ENCODE measurements at regions of chr4 and their contacts with region 1.

Region 1: GRCh38 chr4:8468746-8469535 is 28.4 kb downstream of the TRMT44 start:
- DNase-seq: peak; percentile 58 to 87 (median 84)
- ATAC-seq: peak; percentile 40 to 58
- H3K4me3 ChIP-seq: no peak overlapping the region
- H3K27ac ChIP-seq: no peak overlapping the region
- H3K4me1 ChIP-seq: peaks cover 3% of the 10 kb centered on the region
- H3K27me3 ChIP-seq: no peaks in the 10 kb centered on the region

Region 2: GRCh38 chr4:8351931-8352367 is 117.0 kb before region 1 on chr4:
- intact Hi-C with region 1: no loop called
- DNase-seq: no peak
- ATAC-seq: peak in 1 of 2 donors; percentile 11
- H3K4me3 ChIP-seq: no peak overlapping the region
- H3K27ac ChIP-seq: no peak overlapping the region
- H3K4me1 ChIP-seq: peaks cover 5% of the 10 kb centered on the region
- H3K27me3 ChIP-seq: no peaks in the 10 kb centered on the region

Region 3: GRCh38 chr4:8594097-8595038 is 125.4 kb after region 1 on chr4:
- intact Hi-C with region 1: loop called (anchors 2 to 5 kb)
- DNase-seq: peak in 2 of 3 donors; percentile 46 to 70
- ATAC-seq: peak; percentile 53 to 55
- H3K4me3 ChIP-seq: no peak overlapping the region
- H3K27ac ChIP-seq: no peak overlapping the region
- H3K4me1 ChIP-seq: no peaks in the 10 kb centered on the region
- H3K27me3 ChIP-seq: no peaks in the 10 kb centered on the region